ENCODE measurements at regions of chr1 and their contacts with region 1.

Region 1: DNA sequence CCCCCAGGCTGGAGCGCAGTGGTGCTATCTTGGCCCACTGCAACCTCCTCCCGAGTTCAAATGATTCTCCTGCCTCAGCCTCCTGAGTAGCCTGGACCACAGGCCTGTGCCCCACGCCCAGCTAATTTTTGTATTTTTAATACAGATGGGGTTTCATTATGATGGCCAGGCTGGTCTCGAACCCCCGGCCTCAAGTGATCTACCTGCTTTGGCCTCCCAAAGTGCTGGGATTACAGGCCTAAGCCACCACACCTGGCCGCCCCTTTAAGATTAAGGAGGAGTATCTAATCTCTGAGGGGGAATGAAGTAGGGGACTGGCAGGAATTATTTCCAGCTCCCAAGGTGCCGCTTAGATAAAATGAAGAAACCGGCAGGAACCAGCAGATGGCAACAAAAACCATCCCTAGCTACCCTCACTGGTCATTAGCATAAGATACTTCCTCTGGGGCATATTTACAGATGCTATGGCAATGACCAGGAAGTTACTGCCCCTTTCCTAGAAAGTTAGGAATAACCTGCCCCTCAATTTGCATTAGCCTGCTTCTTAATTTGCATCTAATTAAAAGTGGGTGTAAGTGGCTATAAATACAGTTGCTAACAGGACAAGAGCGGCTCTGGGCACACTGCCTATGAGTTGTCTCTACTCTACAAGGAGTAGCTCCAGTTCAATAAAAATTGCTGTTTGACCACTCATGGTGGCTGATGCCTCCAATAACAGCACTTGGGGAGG is 7.1 kb upstream of the NSUN4 start:
- DNase-seq: peak; percentile 38
- ATAC-seq: peak; percentile 95
- H3K4me3 Mint-ChIP-seq: no peak overlapping the region
- H3K27ac Mint-ChIP-seq: peak overlapping the region; percentile 63; the same call in 1 of the 2 replicates
- H3K4me1 Mint-ChIP-seq: peaks cover 33% of the 10 kb centered on the region
- H3K27me3 Mint-ChIP-seq: no peaks in the 10 kb centered on the region
- CTCF ChIP-seq: no peak

Region 2: GRCh38 chr1:46247436-46248121 is 85.9 kb before region 1 on chr1 and contains the start of gene RAD54L:
- CTCF ChIA-PET with region 1: interaction called, 11 read pairs
- POLR2A ChIA-PET with region 1: no interaction called
- DNase-seq: peak; percentile 99
- ATAC-seq: peak; percentile 90
- H3K4me3 Mint-ChIP-seq: peak within 1 kb of the TSS; percentile 99
- H3K27ac Mint-ChIP-seq: peak within 1 kb of the TSS; percentile 99
- H3K4me1 Mint-ChIP-seq: peaks cover 17% of the 10 kb centered on the region
- H3K27me3 Mint-ChIP-seq: no peaks in the 10 kb centered on the region; the same call in 1 of the 2 replicates
- CTCF ChIP-seq: no peak
- total RNA-seq, gene RAD54L: 51.2 to 54.7 TPM (median 53.7 TPM) in 3 replicates

Region 3: DNA sequence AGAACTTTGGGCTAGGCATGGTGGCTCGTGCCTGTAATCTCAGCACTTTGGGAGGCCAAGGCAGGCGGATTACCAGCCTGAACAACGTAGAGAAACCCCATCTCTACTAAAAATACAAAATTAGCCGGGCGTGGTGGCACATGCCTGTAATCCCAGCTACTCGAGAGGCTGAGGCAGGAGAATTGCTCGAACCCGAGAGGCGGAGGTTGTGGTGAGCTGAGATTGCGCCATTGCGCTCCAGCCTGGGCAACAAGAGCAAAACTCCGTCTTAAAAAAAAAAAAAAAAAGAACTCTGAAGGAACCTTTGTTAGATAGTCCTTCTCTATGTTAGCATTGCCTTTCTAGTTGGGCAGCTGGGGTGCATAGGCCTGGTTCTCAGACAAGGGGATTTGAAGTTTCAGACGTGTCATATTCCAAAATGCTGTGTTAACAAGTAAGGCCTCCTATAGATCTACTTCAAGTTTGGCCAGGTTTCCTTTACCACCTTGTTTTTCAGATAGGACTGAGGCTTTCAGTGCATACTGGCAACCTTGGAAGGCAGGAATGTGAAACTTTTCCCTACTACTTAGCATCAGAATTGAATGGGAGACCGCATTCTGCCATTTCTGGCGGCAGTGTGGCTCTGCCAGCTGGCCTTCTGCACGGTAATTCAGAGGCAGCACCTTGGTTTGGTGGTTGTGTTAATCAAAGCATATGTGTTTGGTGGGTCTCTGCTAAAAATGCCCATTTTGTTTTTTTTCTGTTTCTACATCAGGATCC is 23.9 kb before region 1 on chr1:
- CTCF ChIA-PET with region 1: interaction called, 14 read pairs
- POLR2A ChIA-PET with region 1: interaction called, 3 read pairs
- DNase-seq: no peak
- ATAC-seq: peak; percentile 24; the same call in 1 of the 2 replicates
- H3K4me3 Mint-ChIP-seq: no peak overlapping the region
- H3K27ac Mint-ChIP-seq: peak overlapping the region; percentile 79
- H3K4me1 Mint-ChIP-seq: peaks cover 45% of the 10 kb centered on the region
- H3K27me3 Mint-ChIP-seq: no peaks in the 10 kb centered on the region
- CTCF ChIP-seq: no peak